SK-N-SH (cell line): ENCODE measurements at regions of chr6 and their contacts with region 1.

Region 1: GRCh38 chr6:17803409-17803808 is 96.7 kb upstream of the NUP153 start:
- DNase-seq: no peak
- H3K4me3 ChIP-seq: no peak overlapping the region
- H3K27ac ChIP-seq: no peak overlapping the region
- H3K4me1 ChIP-seq: no peaks in the 10 kb centered on the region
- H3K27me3 ChIP-seq: no peaks in the 10 kb centered on the region
- CTCF ChIP-seq: no peak
- EP300 ChIP-seq: no peak
- RAD21 ChIP-seq: no peak

Region 2: GRCh38 chr6:17156112-17156921 is 647.1 kb before region 1 on chr6:
- CTCF ChIA-PET with region 1: interaction called, 24 read pairs
- POLR2A ChIA-PET with region 1: no interaction called
- DNase-seq: peak; percentile 63
- H3K4me3 ChIP-seq: no peak overlapping the region
- H3K27ac ChIP-seq: no peak overlapping the region
- H3K4me1 ChIP-seq: no peaks in the 10 kb centered on the region
- H3K27me3 ChIP-seq: no peaks in the 10 kb centered on the region
- CTCF ChIP-seq: peak; percentile 86
- EP300 ChIP-seq: no peak
- RAD21 ChIP-seq: peak; percentile 97

Region 3: GRCh38 chr6:17584241-17584803 is 219.1 kb before region 1 on chr6:
- CTCF ChIA-PET with region 1: interaction called, 39 read pairs
- POLR2A ChIA-PET with region 1: no interaction called
- DNase-seq: peak; percentile 69
- H3K4me3 ChIP-seq: peak overlapping the region; percentile 7 to 21; a peak in 2 of 4 replicates
- H3K27ac ChIP-seq: peak overlapping the region in 1 of 2 experiments; percentile 20; a peak in 1 of 4 replicates
- H3K4me1 ChIP-seq: no peaks in the 10 kb centered on the region
- H3K27me3 ChIP-seq: no peaks in the 10 kb centered on the region
- CTCF ChIP-seq: peak; percentile 96
- EP300 ChIP-seq: no peak
- RAD21 ChIP-seq: peak; percentile 82

Region 4: DNA sequence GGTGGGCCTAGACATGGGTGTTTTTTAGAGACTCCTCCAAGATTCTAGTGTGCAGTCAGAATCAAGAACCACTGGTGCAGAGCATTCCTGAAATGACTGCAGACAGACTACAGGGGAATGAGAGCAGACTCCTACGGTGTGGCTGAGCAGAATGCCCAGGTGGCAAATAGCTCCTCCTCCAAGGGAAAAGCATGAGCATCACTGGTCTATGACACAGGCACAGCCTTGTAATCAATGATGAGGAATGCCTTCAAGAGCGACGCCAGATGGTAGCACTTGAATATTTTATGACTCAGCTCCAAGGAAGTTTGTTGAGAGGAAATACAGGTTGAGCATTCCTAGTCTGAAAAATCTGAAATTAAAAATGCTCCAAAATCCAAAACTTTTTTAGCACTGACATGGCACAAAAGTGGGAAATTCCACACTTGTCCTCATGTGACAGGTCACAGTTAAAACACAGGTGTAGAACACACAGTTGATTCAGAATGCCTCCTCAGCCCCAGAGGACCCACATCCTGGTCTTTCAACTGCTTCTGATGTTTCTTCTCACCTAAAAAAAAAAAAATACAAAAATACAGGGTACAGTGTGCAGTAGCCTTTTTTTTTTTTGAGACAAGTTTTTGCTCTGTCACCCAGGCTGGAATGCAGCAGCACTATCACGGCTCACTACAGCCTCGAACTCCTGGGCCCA is 213.9 kb before region 1 on chr6:
- CTCF ChIA-PET with region 1: interaction called, 39 read pairs
- POLR2A ChIA-PET with region 1: no interaction called
- DNase-seq: no peak
- H3K4me3 ChIP-seq: no peak overlapping the region
- H3K27ac ChIP-seq: no peak overlapping the region
- H3K4me1 ChIP-seq: no peaks in the 10 kb centered on the region
- H3K27me3 ChIP-seq: no peaks in the 10 kb centered on the region
- CTCF ChIP-seq: no peak
- EP300 ChIP-seq: peak in 1 of 2 experiments; percentile 14; a peak in 1 of 4 replicates
- RAD21 ChIP-seq: no peak

Region 5: GRCh38 chr6:17790489-17790888 is 12.9 kb before region 1 on chr6:
- CTCF ChIA-PET with region 1: interaction called, 38 read pairs
- POLR2A ChIA-PET with region 1: no interaction called
- DNase-seq: no peak
- H3K4me3 ChIP-seq: no peak overlapping the region
- H3K27ac ChIP-seq: no peak overlapping the region
- H3K4me1 ChIP-seq: no peaks in the 10 kb centered on the region
- H3K27me3 ChIP-seq: no peaks in the 10 kb centered on the region
- CTCF ChIP-seq: no peak
- EP300 ChIP-seq: no peak
- RAD21 ChIP-seq: no peak

Region 6: DNA sequence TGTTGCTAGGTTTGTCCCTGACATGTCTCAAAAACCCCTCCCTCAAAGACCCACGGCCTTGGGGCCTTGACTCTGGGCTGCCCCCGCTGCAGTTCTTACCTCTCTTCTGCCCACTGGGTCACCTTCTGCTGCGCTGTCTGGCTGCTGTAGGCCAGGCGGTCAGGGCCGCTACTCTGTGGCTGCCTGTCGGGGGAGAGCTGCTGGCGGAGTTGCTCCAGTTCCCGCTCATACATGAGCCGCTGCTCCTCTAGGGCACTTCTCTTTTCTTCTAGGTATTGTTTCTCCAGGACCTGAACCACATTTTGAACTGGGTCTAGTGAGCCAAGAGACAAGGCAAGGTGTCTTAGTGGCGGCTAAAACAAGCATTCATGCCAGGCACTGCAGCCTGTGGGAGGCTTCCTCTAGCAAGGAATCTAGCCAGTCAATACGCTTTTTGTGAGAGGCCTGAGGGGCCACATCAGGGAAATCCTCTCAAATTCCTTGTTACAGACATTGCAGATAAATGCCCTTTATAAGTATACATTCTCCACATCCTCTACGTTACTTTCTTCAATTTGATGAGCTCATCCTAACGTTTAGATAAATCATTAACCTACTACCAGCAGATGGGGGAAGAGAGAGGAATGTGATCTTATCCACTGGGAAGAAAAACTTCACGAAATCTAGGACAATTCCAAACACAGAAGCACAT is 13.7 kb after region 1 on chr6:
- CTCF ChIA-PET with region 1: interaction called, 20 read pairs
- POLR2A ChIA-PET with region 1: no interaction called
- DNase-seq: no peak
- H3K4me3 ChIP-seq: no peak overlapping the region
- H3K27ac ChIP-seq: 0 out of 4 replicates have a peak overlapping the region, but pooled peaks of 1 of the 2 experiments have one; percentile 19
- H3K4me1 ChIP-seq: no peaks in the 10 kb centered on the region
- H3K27me3 ChIP-seq: no peaks in the 10 kb centered on the region
- CTCF ChIP-seq: peak; percentile 49
- EP300 ChIP-seq: no peak
- RAD21 ChIP-seq: no peak

Region 7: GRCh38 chr6:18115356-18115755 is 311.9 kb after region 1 on chr6:
- CTCF ChIA-PET with region 1: no interaction called
- POLR2A ChIA-PET with region 1: no interaction called
- DNase-seq: no peak
- H3K4me3 ChIP-seq: no peak overlapping the region
- H3K27ac ChIP-seq: no peak overlapping the region
- H3K4me1 ChIP-seq: no peaks in the 10 kb centered on the region
- H3K27me3 ChIP-seq: no peaks in the 10 kb centered on the region
- CTCF ChIP-seq: no peak
- EP300 ChIP-seq: no peak
- RAD21 ChIP-seq: no peak